ENCODE measurements at regions of chr21 and their contacts with region 1.

Region 1: DNA sequence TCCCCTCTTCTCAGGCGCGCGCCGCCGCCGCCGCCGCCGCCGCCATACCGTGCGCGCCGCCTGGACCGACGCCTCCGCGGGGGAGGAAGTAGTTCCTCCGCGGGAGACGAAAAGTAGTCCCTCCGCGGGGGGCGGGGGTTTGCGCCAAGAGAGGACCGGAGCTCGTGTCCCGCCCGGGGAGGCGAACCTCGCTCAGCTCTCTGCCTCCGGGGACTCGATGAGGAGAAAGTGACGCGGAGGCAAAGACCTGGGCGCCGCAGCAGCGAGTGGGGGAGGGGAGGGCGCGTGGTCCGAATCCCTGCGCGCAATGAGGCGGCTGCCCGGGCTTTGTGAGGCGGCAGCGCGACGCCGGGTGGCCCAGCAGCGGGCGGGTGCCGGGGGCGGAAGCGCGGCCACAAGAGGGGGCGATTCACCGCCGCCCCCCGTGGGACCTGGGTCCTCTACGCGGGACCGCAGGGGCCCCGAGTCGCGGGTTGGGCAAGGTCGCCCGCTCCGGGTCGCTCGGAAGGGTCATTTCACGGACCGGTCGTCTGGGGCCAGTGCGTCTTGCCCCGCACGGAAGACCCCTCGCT is at the start of gene BRWD1:
- DNase-seq: peak; percentile 86 to 93
- ATAC-seq: peak; percentile 82 to 88 (median 86)
- H3K4me3 ChIP-seq: peak within 1 kb of the TSS; percentile 97
- H3K27ac ChIP-seq: peak within 1 kb of the TSS; percentile 98
- H3K4me1 ChIP-seq: peaks cover 22% of the 10 kb centered on the region
- H3K27me3 ChIP-seq: no peaks in the 10 kb centered on the region
- CTCF ChIP-seq: peak; percentile 42
- total RNA-seq, gene BRWD1: 30.2 to 33.0 (median 32.0) TPM

Region 2: DNA sequence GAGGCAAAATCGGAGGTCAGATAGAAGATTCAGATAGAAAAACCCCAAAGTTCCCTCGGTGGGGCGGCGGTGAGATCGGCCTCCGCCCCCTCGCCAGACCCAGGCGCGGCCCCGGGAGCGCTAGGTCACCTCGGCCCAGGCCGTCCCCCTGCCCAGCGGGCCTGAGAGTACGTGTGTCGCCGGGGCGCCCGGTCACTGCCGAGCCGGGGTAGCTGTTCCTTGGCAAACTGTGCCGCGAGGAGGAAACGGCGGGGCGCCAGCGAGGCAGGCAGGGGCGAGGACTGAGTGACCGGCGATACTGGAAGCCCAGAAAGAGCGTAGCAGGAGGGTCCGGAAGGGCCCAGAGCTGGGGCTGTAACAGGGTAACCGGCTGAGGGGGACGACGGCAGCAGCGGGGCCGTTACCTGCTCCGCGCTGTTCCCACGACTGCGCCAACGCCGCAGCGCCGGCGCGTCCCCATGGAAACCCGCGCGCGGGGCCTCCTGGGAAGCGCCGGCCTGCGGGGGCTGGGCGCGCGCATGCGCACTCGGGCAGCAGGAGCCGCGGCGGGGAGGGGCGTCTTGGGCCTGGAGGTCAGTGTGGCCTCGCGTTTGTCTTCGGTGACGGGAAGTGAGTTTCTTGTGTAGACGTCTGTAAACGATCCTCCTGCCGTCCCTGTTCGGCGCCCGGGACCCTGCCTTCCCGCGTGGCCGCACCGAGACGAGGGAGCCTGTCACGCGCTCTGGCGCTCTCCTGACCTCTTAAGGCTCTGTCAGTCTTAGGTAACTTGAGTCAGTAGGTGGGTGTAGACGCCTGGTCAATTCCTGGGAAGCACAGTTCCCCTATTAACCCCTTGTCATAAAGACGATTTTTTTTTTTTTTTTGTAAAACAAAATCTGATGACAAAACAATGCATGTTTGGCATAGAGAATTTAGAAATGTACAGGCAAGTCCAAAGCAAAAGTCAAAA is 131.9 kb after region 1 on chr21 and contains the start of gene LCA5L:
- intact Hi-C with region 1: loop called in 1 of 2 experiments (anchors 10 kb)
- DNase-seq: peak; percentile 91 to 96
- ATAC-seq: peak; percentile 92 to 96 (median 93)
- H3K4me3 ChIP-seq: peak within 1 kb of the TSS; percentile 77
- H3K27ac ChIP-seq: peak within 1 kb of the TSS; percentile 95
- H3K4me1 ChIP-seq: peaks cover 31% of the 10 kb centered on the region
- H3K27me3 ChIP-seq: no peaks in the 10 kb centered on the region
- CTCF ChIP-seq: no peak
- total RNA-seq, gene LCA5L: 2.3 to 5.3 (median 3.4) TPM